Testis (tissue), 5 donors: ENCODE measurements at regions of chr11 and their contacts with region 1.

Region 1: DNA sequence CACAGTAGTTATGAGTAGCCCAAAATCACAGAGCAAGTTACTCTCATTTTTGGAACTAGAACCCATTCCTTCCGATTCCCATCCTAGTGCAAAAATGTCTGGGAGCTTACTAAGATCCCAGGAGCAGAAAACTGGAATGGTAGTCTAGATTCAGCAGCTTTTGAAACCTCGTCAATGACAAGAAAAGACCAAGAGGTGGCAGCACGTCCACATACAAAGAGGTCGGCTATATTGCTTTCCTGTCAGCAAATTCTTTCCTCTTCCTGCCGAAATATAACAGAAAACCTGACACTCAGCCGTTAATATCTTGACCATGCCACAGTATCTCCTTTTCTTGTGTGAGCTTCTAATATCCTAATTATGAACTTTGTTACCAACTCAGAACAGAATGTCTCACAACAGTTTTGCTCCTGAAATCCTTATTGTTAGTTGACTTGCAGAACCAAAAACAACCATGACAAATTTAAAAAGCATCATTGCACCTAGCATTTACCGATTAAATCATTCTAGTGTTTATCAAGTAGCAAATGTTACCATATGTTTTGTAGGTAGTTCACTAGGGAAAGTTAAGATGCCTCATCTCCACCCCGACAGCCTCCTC is 92.8 kb upstream of the OR9G4 start:
- DNase-seq: peak; percentile 59
- H3K4me3 ChIP-seq: no peak overlapping the region
- H3K27ac ChIP-seq: no peak overlapping the region
- H3K4me1 ChIP-seq: no peaks in the 10 kb centered on the region
- H3K27me3 ChIP-seq: no peaks in the 10 kb centered on the region
- CTCF ChIP-seq: peak; percentile 42 to 73 (median 57)
- POLR2A ChIP-seq: no peak

Region 2: DNA sequence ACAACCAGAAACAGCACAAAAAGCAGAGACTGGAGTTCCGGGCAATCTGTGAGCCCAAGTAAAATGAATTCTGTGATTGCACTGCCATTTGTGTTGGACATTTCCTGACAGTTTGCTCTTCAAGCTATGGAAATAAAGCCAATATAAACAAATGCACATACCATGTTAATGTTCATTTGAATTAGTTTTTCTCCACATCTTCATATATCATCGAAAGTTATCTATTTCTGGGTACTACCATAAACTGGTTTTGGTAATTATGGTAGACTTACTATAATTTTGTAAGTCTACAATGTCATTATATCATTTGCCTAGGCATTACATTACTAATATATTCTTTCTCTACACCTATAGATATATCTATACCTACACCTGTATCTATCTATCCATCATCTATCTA is 298.2 kb before region 1 on chr11 and contains the start of gene OR5M11:
- intact Hi-C with region 1: no loop called
- DNase-seq: no peak
- H3K4me3 ChIP-seq: no peak within 1 kb of the TSS
- H3K27ac ChIP-seq: no peak within 1 kb of the TSS
- H3K4me1 ChIP-seq: no peaks in the 10 kb centered on the region
- H3K27me3 ChIP-seq: no peaks in the 10 kb centered on the region
- CTCF ChIP-seq: no peak
- POLR2A ChIP-seq: no peak
- total RNA-seq, gene OR5M11: not detected

Region 3: GRCh38 chr11:56910785-56911184 is 69.5 kb after region 1 on chr11:
- intact Hi-C with region 1: no loop called
- DNase-seq: no peak
- H3K4me3 ChIP-seq: no peak overlapping the region
- H3K27ac ChIP-seq: no peak overlapping the region
- H3K4me1 ChIP-seq: no peaks in the 10 kb centered on the region
- H3K27me3 ChIP-seq: no peaks in the 10 kb centered on the region
- CTCF ChIP-seq: no peak
- POLR2A ChIP-seq: no peak

Region 4: GRCh38 chr11:57249384-57250319 is 408.3 kb after region 1 on chr11:
- intact Hi-C with region 1: loop called (anchors 5 kb)
- DNase-seq: peak; percentile 85
- H3K4me3 ChIP-seq: no peak overlapping the region
- H3K27ac ChIP-seq: no peak overlapping the region
- H3K4me1 ChIP-seq: no peaks in the 10 kb centered on the region
- H3K27me3 ChIP-seq: no peaks in the 10 kb centered on the region
- CTCF ChIP-seq: peak; percentile 46 to 83 (median 81)
- POLR2A ChIP-seq: no peak